Left ventricle myocardium inferior (tissue), 1 donor: ENCODE measurements at regions of chr19 and their contacts with region 1.

Region 1: DNA sequence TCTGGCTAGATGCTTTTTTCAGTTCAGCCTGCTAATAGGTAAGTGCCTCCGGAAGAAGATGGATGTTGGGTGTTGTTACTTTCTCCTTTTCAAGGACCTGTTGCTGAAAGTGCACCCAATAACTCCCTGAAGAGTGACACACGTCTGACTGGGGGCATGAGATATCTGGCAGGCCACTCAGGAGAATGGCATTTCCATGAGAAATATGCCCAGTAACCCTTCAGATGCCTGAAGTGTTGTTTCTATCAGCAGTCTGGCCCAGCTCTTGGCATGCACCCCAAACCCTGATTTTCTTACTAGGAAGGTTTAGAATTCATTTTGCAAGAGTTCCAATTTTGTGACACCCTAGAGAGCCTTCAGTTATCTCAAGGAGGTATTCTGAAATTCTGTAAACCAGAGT is 71.5 kb downstream of the ARHGAP35 start:
- DNase-seq: no peak
- H3K4me3 ChIP-seq: no peak overlapping the region
- H3K27ac ChIP-seq: peak overlapping the region; percentile 10
- H3K4me1 ChIP-seq: peaks cover 98% of the 10 kb centered on the region
- H3K27me3 ChIP-seq: no peaks in the 10 kb centered on the region
- CTCF ChIP-seq: no peak

Region 2: DNA sequence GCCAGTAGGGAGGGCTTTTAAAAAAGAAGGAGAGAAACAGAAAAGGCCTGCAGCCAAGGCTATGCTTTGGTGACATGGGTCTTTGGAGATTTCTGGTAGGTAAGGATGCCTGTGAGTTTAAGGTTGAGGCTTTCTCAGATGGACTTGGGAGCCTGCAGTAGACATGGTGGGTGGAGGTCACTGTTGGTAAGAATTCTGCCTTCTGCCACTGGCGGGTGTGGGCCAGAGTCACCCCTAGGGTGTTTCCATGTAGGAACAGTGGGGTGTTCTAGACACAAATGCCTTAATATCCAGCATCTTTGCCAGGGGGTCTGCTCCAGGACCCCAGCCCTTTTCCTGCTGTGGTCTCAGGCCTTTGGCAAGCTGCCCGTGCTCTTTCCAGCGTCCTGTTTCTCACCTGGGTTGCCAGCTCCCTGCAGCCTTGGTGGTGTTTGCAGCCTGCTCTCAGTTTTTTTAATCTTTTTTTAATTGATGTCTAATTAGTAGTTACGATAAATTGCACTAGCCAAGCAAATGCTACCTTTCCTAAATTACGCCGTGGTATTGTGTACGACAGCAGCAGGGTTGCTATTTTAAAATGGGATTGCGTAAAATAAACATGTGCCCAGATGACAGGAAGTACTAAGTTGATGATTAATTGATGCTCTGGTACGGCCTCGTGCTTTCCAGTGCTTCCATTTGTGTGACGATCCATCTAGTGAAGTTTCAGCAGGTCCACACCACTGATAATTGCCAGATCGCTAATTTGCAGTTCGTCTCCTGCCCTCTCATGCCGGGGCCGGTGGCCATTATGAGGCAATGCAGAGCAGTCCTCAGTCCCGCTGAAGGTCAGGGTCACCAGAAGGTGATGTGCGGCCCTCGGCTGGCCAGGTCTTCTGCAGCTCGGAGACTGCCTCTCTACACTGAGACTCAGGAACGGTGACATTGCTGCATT is 52.0 kb after region 1 on chr19:
- intact Hi-C with region 1: loop called (anchors 10 kb)
- DNase-seq: peak; percentile 61
- H3K4me3 ChIP-seq: no peak overlapping the region
- H3K27ac ChIP-seq: peak overlapping the region; percentile 91
- H3K4me1 ChIP-seq: peaks cover 88% of the 10 kb centered on the region
- H3K27me3 ChIP-seq: no peaks in the 10 kb centered on the region
- CTCF ChIP-seq: no peak

Region 3: GRCh38 chr19:47158879-47159503 is 226.6 kb after region 1 on chr19:
- intact Hi-C with region 1: no loop called
- DNase-seq: no peak
- H3K4me3 ChIP-seq: peak overlapping the region; percentile 31
- H3K27ac ChIP-seq: peak overlapping the region; percentile 93
- H3K4me1 ChIP-seq: peaks cover 55% of the 10 kb centered on the region
- H3K27me3 ChIP-seq: no peaks in the 10 kb centered on the region
- CTCF ChIP-seq: no peak